Mammary epithelial cell (primary cell): ENCODE measurements at regions of chr3 and their contacts with region 1.

Region 1: GRCh38 chr3:14144423-14145075 is 19.7 kb downstream of the TMEM43 start:
- DNase-seq: peak; percentile 94
- H3K4me3 ChIP-seq: peak overlapping the region in 1 of 3 experiments; percentile 18
- H3K27ac ChIP-seq: peak overlapping the region; percentile 99
- H3K4me1 ChIP-seq: peaks cover 40% of the 10 kb centered on the region
- H3K27me3 ChIP-seq: no peaks in the 10 kb centered on the region
- CTCF ChIP-seq: no peak

Region 2: DNA sequence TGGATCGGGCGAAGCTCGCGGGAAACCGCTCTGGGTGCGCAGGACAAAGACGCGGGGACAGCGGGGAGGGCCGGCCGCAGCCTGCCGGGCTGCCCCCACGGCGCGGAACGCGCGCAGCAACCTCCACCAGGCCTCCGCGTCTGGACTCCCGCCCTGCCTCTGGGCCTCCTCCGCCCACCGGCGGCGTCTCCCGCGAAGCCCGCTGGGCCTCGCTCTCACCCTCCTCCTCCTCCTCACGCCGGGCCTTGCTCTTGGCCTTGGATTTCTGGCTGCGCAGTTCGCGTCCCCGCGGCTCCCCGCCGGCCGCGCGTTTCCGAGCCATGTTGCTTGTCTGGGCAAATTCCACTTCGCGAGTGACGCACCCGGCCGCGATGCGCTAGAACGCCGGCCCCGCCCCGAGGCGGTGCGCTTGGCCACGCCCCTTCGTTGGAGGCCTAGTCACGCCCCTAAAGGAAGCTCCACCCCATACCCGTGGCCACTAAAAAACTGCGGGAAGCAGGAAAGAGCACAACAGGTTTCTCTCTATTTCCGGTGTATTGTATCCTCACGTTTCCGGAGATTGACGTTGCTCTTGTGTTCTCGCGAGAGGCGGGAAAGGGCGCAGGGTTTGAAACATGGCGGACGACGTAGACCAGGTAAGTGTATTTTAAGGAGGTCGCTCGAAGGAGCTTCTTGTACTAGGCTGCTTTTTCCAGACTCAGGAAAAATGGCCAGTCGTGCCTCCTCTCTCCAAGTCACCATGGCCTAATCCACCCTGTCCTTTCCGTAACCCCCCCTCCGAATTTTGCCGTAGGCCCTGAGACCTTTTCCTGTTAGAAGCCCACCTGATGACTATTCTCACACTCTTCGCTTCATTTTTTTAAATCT is 33.9 kb after region 1 on chr3 and contains the starts of genes LSM3 and XPC:
- CTCF ChIA-PET with region 1: no interaction called
- dilution Hi-C with region 1: no loop called
- in situ Hi-C with region 1: no loop called
- intact Hi-C with region 1: loop called (anchors 1 kb)
- DNase-seq: peak; percentile 98
- H3K4me3 ChIP-seq: peak within 1 kb of the TSS; percentile 92 to 94 (median 93)
- H3K27ac ChIP-seq: peak within 1 kb of the TSS; percentile 94
- H3K4me1 ChIP-seq: peaks cover 36% of the 10 kb centered on the region
- H3K27me3 ChIP-seq: no peaks in the 10 kb centered on the region
- CTCF ChIP-seq: no peak
- total RNA-seq, gene LSM3: 5.0 to 11.7 TPM
- total RNA-seq, gene XPC: 42.5 to 68.2 TPM